ENCODE measurements at regions of chr1 and their contacts with region 1.

Region 1: DNA sequence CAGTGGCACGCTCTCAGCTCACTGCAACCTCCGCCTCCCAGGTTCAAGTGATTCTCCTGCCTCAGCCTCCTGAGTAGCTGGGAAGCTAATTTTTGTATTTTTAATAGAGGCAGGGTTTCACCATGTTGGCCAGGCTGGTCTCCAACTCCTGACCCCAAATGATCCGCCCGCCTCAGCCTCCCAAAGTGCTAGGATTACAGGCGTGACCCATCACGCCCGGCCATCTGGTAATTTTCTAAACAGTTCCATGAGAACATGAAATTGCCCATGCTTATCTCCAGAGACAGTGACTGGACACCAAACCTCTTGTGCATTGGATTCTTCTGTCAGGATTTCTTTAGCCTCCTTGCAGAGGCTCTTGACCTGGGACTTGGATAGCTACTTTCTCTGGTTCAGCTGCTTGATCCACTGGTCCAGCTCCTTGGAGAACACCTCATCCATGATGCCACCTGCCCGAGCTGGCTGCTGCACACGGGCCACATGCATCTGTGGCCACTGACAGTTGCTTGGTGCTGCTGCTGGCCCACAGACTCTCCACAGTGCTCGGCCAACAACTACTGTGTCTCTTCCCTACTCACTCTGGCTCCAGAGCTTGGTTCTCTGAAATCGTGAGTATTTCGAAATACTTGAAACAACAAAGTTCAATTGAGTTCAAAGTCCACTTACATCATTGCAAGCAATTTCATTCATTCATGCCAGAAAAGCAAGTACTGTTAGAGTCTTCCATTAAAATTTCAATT is 40.0 kb upstream of the CTPS1 start:
- DNase-seq: no peak
- H3K4me3 ChIP-seq: no peak overlapping the region
- H3K27ac ChIP-seq: no peak overlapping the region
- H3K4me1 ChIP-seq: peaks cover 13% of the 10 kb centered on the region
- H3K27me3 ChIP-seq: no peaks in the 10 kb centered on the region
- CTCF ChIP-seq: no peak

Region 2: GRCh38 chr1:40919475-40920011 is 19.9 kb before region 1 on chr1:
- CTCF ChIA-PET with region 1: interaction called, 10 read pairs
- POLR2A ChIA-PET with region 1: no interaction called
- intact Hi-C with region 1: no loop called
- DNase-seq: peak; percentile 76 to 77
- H3K4me3 ChIP-seq: no peak overlapping the region
- H3K27ac ChIP-seq: peak overlapping the region; percentile 34
- H3K4me1 ChIP-seq: peaks cover 21% of the 10 kb centered on the region
- H3K27me3 ChIP-seq: no peaks in the 10 kb centered on the region
- CTCF ChIP-seq: no peak

Region 3: DNA sequence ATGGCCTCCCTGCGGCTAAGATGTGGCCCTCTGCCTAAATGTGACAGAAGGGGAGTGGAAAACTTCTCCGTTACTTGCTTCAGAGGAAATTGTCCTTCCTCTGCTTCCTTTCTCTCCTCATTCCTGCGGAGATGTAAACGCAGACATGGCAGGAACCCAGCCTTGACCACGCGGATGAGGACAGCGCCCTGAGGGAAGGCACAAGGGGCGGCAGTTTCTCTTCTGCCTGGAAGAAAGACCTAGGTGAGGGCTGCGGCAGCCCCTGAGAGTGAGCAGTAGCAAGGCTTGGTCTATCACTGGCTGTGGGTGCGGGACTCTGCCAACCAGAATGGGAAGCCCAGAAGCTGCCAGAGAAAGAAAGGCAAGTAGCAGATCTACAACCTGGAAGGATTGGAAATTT is 26.0 kb after region 1 on chr1:
- CTCF ChIA-PET with region 1: no interaction called
- POLR2A ChIA-PET with region 1: interaction called, 10 read pairs
- intact Hi-C with region 1: no loop called
- DNase-seq: no peak
- H3K4me3 ChIP-seq: no peak overlapping the region
- H3K27ac ChIP-seq: no peak overlapping the region
- H3K4me1 ChIP-seq: peaks cover 30% of the 10 kb centered on the region
- H3K27me3 ChIP-seq: no peaks in the 10 kb centered on the region
- CTCF ChIP-seq: no peak

Region 4: DNA sequence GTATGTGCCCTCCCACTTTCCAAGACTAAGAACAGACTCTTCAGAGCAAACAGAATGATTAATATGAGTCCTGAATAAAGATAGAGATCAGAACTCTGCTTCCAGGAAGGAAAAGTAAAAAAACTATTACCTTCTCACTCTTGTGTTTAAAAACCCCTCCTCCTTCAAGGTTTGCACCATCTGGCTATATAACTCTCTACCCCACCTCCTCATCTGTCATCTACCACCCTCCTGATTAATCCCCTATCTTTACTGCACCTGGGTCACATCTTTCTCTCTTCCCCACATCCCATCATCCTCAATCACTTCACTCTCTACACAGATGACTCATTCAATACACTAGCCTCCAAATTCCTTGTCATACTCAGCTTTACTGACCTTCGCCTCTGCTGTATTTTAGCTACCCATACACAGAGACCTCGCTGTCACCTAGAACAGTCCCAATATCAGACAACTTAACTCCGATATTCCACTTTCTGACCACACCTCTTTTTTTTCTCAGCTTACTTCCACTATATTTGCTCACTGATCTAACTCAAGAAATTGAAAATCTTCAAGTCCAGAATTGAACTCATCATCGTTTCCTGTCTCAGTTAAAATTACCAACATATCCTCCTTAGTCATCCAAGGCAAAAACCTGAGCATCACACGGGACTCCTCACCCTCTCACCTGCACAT is 299.0 kb after region 1 on chr1:
- CTCF ChIA-PET with region 1: no interaction called
- POLR2A ChIA-PET with region 1: no interaction called
- intact Hi-C with region 1: no loop called
- DNase-seq: peak; percentile 22 to 55
- H3K4me3 ChIP-seq: no peak overlapping the region
- H3K27ac ChIP-seq: 0 out of 2 replicates have a peak overlapping the region, but pooled peaks have one; percentile 2
- H3K4me1 ChIP-seq: peaks cover 41% of the 10 kb centered on the region
- H3K27me3 ChIP-seq: no peaks in the 10 kb centered on the region
- CTCF ChIP-seq: no peak

Measured in PC-9 (cell line).